ENCODE measurements at regions of chr17 and their contacts with region 1.

Region 1: DNA sequence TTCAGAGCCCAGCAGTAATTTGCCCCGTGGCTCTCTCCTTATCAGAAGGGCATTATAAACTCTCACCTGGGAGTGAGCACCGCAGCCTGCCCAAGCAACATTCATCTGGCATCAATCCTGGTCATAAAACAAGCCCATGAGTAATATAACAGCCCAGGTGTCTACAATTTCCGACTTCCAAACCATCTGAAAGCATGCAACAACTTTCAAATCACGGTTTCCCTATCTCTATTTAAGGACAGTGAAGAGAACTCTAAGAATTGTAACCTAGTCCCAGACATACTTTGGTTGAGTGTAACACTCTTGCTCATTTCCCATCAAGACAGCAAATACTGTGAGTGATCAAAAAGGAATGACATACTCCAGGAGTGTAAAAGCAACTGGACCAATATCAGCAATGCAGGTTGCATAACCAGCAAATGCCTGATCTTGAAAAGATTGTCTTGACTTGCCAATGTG is 487.4 kb upstream of the SOX9 start:
- H3K4me3 ChIP-seq: no peak overlapping the region
- H3K27ac ChIP-seq: no peak overlapping the region; the same call in 1 of the 2 replicates
- H3K4me1 ChIP-seq: peaks cover 19% of the 10 kb centered on the region
- CTCF ChIP-seq: no peak

Region 2: DNA sequence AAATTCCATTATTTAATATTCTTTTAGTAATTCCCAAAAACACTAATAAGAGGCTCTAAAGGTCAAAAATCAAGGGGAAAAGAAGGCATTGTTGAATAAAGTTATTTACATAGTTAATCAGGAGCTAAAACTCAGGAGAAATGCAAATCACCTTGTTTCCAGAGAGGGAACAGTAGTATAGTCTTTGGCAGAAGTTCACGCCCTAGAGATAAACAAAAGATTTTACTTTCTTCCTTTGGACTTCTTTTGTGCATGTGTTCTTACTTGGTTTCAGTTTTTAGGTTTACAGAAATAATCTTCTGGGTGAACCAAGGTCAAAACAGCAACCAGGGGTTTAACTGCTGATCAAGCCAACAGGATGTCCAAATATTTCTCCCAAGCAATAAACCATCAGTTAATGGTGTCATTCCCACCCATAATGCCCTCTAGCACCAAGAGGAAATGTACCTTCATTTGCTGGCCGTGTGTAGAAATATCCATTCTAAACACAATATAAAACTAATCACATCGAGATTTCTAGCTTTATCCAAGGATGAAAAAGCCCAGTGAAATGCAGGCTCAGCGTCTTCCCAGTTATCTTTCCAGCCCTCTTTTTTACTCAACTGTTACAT is 31.4 kb before region 1 on chr17:
- CTCF ChIA-PET with region 1: interaction called, 10 read pairs
- POLR2A ChIA-PET with region 1: no interaction called
- H3K4me3 ChIP-seq: no peak overlapping the region
- H3K27ac ChIP-seq: no peak overlapping the region
- H3K4me1 ChIP-seq: peaks cover 8% of the 10 kb centered on the region
- CTCF ChIP-seq: no peak

Region 3: GRCh38 chr17:72053449-72053848 is 420.0 kb after region 1 on chr17:
- CTCF ChIA-PET with region 1: no interaction called
- POLR2A ChIA-PET with region 1: no interaction called
- H3K4me3 ChIP-seq: no peak overlapping the region
- H3K27ac ChIP-seq: no peak overlapping the region
- H3K4me1 ChIP-seq: no peaks in the 10 kb centered on the region
- CTCF ChIP-seq: no peak

Measured in HEK293 (cell line).